ENCODE measurements at regions of chr16 and their contacts with region 1.

Region 1: DNA sequence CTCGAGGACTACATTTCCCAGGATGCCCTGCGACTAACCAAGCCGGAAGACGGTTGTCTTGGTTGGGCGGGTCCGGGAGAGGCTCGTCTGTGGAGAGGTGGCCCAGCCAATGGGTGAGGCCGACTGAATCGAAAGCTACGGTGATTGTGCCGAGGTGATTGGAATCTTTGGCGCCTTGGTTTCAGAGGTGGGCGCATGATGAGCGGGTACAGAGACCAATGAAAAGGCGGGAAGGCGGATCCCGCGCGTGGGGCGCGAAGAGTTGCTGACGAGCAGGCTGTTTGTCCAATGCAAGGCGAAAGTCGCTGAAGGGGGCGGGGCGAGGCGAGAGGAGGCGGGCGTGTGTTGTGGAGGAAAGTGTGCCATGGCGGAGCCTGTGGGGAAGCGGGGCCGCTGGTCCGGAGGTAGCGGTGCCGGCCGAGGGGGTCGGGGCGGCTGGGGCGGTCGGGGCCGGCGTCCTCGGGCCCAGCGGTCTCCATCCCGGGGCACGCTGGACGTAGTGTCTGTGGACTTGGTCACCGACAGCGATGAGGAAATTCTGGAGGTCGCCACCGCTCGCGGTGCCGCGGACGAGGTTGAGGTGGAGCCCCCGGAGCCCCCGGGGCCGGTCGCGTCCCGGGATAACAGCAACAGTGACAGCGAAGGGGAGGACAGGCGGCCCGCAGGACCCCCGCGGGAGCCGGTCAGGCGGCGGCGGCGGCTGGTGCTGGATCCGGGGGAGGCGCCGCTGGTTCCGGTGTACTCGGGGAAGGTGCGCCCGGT is at the start of gene NFATC2IP:
- DNase-seq: peak; percentile 100
- ATAC-seq: peak; percentile 99
- H3K4me3 ChIP-seq: peak within 1 kb of the TSS; percentile 72 to 98 (median 76)
- H3K27ac ChIP-seq: peak within 1 kb of the TSS; percentile 74 to 88 (median 87)
- H3K4me1 ChIP-seq: peaks cover 9 to 10% of the 10 kb centered on the region in 2 donors
- H3K27me3 ChIP-seq: no peaks in the 10 kb centered on the region
- CTCF ChIP-seq: no peak
- POLR2A ChIP-seq: peak in 1 of 2 donors; percentile 26
- total RNA-seq, gene NFATC2IP: 10.3 to 18.5 (median 14.2) TPM

Region 2: DNA sequence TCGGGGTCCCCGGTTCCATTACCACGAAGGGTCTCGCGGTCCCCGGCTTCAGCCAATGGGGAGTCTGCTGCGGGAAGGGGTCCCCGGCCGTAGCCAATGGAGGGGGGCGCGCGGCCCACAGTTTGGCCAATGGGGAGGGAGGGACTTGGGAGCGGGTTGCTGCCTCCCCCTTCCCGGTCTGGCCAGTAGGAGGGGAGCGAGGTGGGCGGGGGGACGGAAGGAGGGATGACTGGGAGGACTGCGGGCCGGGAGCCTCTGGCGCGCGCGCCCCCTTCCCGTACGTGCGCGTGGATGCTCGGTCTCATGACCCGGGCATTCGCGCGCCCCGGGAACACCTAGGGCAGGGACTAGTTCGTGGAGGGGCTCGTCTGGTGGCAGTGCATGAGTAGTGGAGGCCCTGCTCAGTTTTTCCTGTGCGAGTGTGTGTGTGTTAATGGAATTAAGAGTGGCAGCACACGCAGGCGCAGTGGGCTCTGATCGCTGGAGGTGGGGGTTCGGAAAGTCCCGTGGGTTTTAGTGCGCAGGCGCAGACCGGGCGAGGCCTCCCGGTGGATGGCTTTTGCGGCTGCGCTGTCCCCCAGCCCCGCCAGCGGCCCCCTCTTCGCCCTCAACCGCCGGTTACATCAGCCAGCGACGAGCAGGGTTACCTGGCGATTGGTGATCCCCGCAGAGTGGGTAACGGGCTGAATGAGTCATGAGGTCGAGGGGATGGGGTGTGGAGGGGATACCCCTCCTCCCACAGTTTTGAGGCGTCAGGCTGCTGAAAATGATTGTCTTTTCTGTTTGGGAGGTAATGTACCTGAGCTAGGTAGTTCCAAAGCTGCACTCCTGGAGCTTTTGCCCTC is 126.7 kb before region 1 on chr16:
- in situ Hi-C with region 1: loop called in 3 of 4 experiments (anchors 5 to 10 kb)
- intact Hi-C with region 1: loop called (anchors 1 kb)
- DNase-seq: peak; percentile 98
- ATAC-seq: peak; percentile 81 to 84
- H3K4me3 ChIP-seq: peak overlapping the region; percentile 89 to 99 (median 96)
- H3K27ac ChIP-seq: peak overlapping the region; percentile 99 to 100 (median 100)
- H3K4me1 ChIP-seq: peaks cover 20% of the 10 kb centered on the region in 2 donors
- H3K27me3 ChIP-seq: no peaks in the 10 kb centered on the region
- CTCF ChIP-seq: peak in 4 of 5 experiments; percentile 41 to 45 (median 44)
- POLR2A ChIP-seq: peak; percentile 79 to 84

Region 3: DNA sequence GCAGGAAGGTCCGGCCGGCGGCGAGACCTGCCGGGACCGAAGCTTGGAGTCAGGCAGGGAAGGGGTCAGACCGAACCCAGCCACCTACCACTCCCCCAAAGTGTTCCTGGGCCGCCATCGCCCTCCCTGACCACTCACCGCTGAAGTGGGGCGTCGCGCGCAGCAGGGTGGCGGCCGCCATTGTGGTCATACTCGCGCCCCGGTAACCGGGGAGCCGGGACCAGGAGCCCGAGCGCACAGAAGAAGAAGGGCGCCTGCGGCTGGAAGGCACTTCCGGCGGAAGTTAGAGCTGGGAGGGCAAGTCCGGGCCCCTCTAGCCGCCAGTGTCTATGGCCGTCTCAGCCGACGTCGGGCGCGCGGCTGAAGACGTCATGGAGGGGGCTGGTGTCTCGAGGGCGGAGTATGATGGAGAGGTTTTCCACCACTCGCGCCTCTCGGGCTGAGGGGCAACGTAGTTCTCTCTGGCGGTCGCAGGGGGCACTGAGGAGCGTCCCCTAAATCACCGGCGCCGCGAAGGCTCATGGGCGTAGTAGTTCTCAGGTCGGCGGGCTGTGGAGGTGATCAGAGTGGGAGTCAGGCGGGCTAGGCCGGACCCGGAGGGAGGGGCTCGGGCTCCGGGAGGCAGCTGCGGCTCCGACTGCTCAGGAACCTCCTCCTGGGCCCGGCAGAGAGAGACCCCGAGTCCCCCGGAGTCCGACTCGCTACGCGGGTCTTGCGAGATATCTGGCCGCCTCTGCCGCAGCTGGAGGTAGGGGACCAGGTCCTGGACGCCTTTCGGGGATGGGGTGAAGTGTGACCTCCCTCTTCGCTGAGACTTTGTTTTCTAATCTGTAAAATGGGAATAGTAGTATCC is 104.5 kb before region 1 on chr16 and contains the start of gene TUFM:
- in situ Hi-C with region 1: no loop called
- intact Hi-C with region 1: loop called (anchors 1 kb)
- DNase-seq: peak; percentile 98
- ATAC-seq: peak; percentile 93 to 96
- H3K4me3 ChIP-seq: peak within 1 kb of the TSS; percentile 93 to 100 (median 98)
- H3K27ac ChIP-seq: peak within 1 kb of the TSS; percentile 92 to 96 (median 94)
- H3K4me1 ChIP-seq: peaks cover 20 to 24% of the 10 kb centered on the region in 2 donors
- H3K27me3 ChIP-seq: no peaks in the 10 kb centered on the region
- CTCF ChIP-seq: peak; percentile 36 to 81 (median 70)
- POLR2A ChIP-seq: peak; percentile 72 to 80
- total RNA-seq, gene TUFM: 140 to 196 (median 167) TPM

Region 4: GRCh38 chr16:28863929-28864793 is 86.7 kb before region 1 on chr16:
- in situ Hi-C with region 1: loop called in 2 of 4 experiments (anchors 10 kb)
- intact Hi-C with region 1: loop called (anchors 5 kb)
- DNase-seq: peak in 1 of 2 donors; percentile 56
- ATAC-seq: peak; percentile 9 to 20
- H3K4me3 ChIP-seq: peak overlapping the region; percentile 69 to 98 (median 88)
- H3K27ac ChIP-seq: peak overlapping the region; percentile 94 to 98 (median 96)
- H3K4me1 ChIP-seq: peaks cover 13 to 16% of the 10 kb centered on the region in 2 donors
- H3K27me3 ChIP-seq: no peaks in the 10 kb centered on the region
- CTCF ChIP-seq: no peak
- POLR2A ChIP-seq: no peak

Region 5: DNA sequence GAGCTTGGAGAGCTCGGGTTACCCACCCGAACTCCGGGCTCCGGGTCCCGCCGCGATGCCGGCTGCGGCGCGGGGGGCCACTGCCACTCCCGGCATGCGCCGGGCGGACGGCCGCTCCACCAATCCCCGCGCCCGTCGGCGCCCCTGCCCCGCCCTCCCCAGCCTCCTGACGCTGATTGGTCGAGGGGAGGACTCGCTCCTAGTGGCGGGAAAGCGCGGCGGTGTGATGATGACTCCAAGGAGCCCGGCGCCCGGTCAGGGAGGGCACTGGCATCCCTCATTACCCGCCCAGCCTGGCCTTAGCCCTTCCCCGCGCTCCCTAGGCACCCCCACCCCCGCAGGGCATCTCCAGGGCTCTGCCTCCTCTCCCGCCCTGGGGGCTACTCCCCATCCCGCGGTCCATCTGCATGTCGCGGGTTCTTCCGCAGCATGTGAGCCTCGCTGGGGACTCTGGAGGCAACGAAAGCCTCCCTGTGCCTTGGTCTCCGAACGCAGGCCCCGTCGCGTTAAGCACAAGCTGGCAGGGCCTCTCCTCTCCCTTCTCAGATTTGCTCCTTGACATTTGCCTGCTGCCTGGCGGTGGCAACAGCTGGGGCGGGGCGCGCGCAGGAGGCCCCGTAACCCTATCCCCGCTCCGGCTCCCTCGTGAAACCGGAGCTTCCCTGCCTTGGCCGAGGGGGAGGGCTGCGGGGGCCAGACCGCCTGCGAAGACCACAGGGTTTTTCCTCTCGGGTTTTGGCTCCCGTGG is 70.8 kb before region 1 on chr16:
- in situ Hi-C with region 1: loop called in 1 of 4 experiments (anchors 10 kb)
- intact Hi-C with region 1: loop called (anchors 1 kb)
- DNase-seq: peak; percentile 86 to 91
- ATAC-seq: peak; percentile 40 to 55
- H3K4me3 ChIP-seq: peak overlapping the region; percentile 68 to 95 (median 75)
- H3K27ac ChIP-seq: peak overlapping the region; percentile 83 to 92 (median 90)
- H3K4me1 ChIP-seq: peaks cover 37 to 68% of the 10 kb centered on the region in 2 donors
- H3K27me3 ChIP-seq: no peaks in the 10 kb centered on the region
- CTCF ChIP-seq: peak in 3 of 5 experiments; percentile 24 to 44 (median 28)
- POLR2A ChIP-seq: peak; percentile 52 to 75

Region 6: DNA sequence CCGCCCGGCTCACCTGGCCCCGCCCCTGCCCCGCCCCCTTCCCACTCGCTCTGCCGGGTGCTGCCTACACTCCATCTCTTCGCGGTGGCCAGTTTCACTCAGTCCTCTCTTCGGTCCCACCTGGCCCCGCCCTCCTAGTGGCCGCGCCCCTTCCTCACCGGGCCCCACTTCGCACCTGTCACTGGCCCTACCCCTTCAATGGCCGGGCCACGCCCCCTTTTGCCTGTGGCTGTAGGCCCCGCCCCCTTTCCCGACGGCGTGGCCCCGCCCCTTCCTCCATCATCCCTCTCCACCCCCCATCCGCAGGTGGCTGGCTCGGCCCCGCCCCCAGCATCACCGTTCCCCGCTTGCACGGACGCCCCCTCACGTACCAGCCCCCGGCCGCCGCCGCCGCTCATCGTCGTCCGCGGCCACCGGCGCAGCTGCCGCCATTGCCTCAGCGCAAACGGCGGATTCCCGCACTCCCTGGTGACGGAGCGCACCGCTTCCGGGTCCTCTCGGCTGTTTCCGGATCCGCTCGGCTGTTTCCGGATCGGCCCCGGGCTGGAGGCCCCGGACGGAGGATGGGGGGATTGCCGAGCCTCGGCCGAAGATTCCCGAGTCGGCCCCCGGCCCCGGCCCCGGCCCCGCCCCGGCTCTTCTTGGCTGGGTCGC is 26.0 kb before region 1 on chr16 and contains the start of gene RABEP2:
- in situ Hi-C with region 1: no loop called
- intact Hi-C with region 1: loop called (anchors 1 kb)
- DNase-seq: peak; percentile 77 to 89
- ATAC-seq: peak; percentile 91 to 96
- H3K4me3 ChIP-seq: peak within 1 kb of the TSS; percentile 67 to 99 (median 86)
- H3K27ac ChIP-seq: peak within 1 kb of the TSS; percentile 83 to 99 (median 94)
- H3K4me1 ChIP-seq: peaks cover 9% of the 10 kb centered on the region in 2 donors
- H3K27me3 ChIP-seq: no peaks in the 10 kb centered on the region
- CTCF ChIP-seq: no peak
- POLR2A ChIP-seq: peak; percentile 63 to 69
- total RNA-seq, gene RABEP2: 2.9 to 13.9 (median 6.4) TPM

Region 7: GRCh38 chr16:28974437-28975157 is 23.8 kb after region 1 on chr16 and contains the start of gene SPNS1:
- in situ Hi-C with region 1: no loop called
- intact Hi-C with region 1: loop called (anchors 1 kb)
- DNase-seq: peak; percentile 97
- ATAC-seq: peak; percentile 95 to 97
- H3K4me3 ChIP-seq: peak within 1 kb of the TSS; percentile 90 to 98 (median 95)
- H3K27ac ChIP-seq: peak within 1 kb of the TSS; percentile 81 to 89 (median 84)
- H3K4me1 ChIP-seq: peaks cover 14 to 20% of the 10 kb centered on the region in 2 donors
- H3K27me3 ChIP-seq: no peaks in the 10 kb centered on the region
- CTCF ChIP-seq: peak in 1 of 5 experiments; percentile 36
- POLR2A ChIP-seq: peak; percentile 23 to 45
- total RNA-seq, gene SPNS1: 12.7 to 26.0 (median 23.4) TPM

Region 8: GRCh38 chr16:28984619-28985135 is 33.8 kb after region 1 on chr16 and contains the start of gene LAT:
- in situ Hi-C with region 1: no loop called
- intact Hi-C with region 1: no loop called
- DNase-seq: no peak
- ATAC-seq: no peak
- H3K4me3 ChIP-seq: peak within 1 kb of the TSS in 1 of 4 donors; percentile 3
- H3K27ac ChIP-seq: no peak within 1 kb of the TSS
- H3K4me1 ChIP-seq: no peaks in the 10 kb centered on the region
- H3K27me3 ChIP-seq: no peaks in the 10 kb centered on the region
- CTCF ChIP-seq: no peak
- POLR2A ChIP-seq: no peak
- total RNA-seq, gene LAT: 0.31 to 0.49 TPM in 2 of 4 donors, not detected in the others